Heart left ventricle (tissue), 16 donors: ENCODE measurements at regions of chr2 and their contacts with region 1.

Region 1: GRCh38 chr2:96174251-96175144 is 29.3 kb upstream of the DUSP2 start:
- DNase-seq: peak; percentile 68 to 82 (median 78)
- ATAC-seq: peak; percentile 59 to 82 (median 76)
- H3K4me3 ChIP-seq: no peak overlapping the region
- H3K27ac ChIP-seq: no peak overlapping the region
- H3K4me1 ChIP-seq: peaks cover 0 to 16% (median 5%) of the 10 kb centered on the region in 12 donors
- H3K27me3 ChIP-seq: no peaks in the 10 kb centered on the region
- CTCF ChIP-seq: peak; percentile 85 to 96 (median 90)
- POLR2A ChIP-seq: no peak

Region 2: DNA sequence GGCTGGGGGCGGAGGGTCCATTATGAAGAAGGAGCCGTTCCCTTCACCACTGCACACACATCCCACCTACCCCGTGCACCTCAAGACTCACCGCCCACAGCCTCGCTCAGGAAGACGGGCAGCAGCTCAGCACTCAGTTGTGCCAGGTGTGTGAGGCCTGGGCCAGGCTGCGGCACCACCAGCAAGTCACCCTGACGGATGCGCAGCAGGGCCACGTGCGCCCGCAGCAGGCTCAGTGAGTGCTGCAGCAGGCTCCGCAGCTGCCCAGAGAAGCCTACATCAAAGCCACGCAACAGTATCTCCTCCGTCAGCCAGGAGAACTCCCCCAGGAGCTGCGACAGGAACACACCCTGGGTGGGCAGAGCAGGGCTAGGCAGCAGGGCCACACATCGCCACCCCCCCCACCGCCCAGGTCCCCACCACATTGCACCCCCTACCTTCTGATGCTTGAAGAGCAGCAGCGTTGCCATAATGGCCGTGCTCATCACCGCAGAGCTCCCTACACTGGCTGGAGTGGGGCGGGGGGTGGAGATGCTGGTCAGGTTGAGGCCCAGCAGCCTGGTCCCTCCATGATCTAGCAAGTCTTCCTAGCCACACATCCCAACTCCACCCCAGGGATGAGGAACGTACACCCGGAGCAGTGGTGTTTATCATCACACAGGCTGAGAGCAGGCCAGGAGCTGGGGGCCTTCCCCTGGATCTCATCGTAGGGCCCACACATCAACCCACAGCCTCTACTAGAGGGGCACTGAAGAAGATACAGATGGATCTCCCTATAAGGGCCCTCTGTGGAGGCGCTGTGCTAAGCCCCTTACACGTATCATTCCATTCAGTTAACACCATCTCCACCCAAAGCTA is 149.9 kb before region 1 on chr2:
- intact Hi-C with region 1: loop called in 1 of 10 experiments (anchors 10 kb)
- DNase-seq: no peak
- ATAC-seq: no peak
- H3K4me3 ChIP-seq: peak overlapping the region in 2 of 12 donors; percentile 9 to 22
- H3K27ac ChIP-seq: peak overlapping the region in 1 of 12 donors; percentile 33
- H3K4me1 ChIP-seq: peaks cover 0 to 6% (median 0%) of the 10 kb centered on the region in 12 donors
- H3K27me3 ChIP-seq: no peaks in the 10 kb centered on the region
- CTCF ChIP-seq: no peak
- POLR2A ChIP-seq: no peak